ENCODE measurements at regions of chr19 and their contacts with region 1.

Region 1: DNA sequence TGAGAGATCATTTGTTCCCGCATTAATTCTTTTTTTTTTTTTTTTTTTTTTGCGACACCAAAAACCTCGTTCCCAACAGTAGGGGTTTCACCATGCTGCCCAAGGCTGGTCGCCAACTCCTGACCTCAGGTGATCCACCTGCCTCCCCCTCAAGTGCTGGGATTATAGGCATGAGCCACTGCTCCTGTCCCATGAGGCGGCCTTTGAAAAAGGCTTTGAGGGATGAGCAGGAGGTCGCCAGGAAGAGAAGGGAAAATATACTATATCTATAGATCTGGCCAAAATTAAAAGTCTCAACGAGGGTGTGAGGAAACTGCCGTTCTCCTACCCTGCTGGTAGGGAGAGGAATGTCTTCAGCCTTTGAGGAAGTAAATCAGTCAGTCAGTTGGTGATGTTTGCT is 26.2 kb downstream of the ZNF473 start:
- DNase-seq: no peak
- ATAC-seq: no peak
- H3K4me3 ChIP-seq: no peak overlapping the region
- H3K27ac ChIP-seq: no peak overlapping the region
- H3K4me1 ChIP-seq: peaks cover 5% of the 10 kb centered on the region
- H3K27me3 ChIP-seq: peaks cover 17% of the 10 kb centered on the region; the same call in 1 of the 2 replicates
- CTCF ChIP-seq: no peak

Region 2: GRCh38 chr19:49746206-49747091 is 305.5 kb before region 1 on chr19:
- CTCF ChIA-PET with region 1: no interaction called
- POLR2A ChIA-PET with region 1: no interaction called
- intact Hi-C with region 1: no loop called
- DNase-seq: peak; percentile 46
- ATAC-seq: peak; percentile 50
- H3K4me3 ChIP-seq: no peak overlapping the region
- H3K27ac ChIP-seq: no peak overlapping the region
- H3K4me1 ChIP-seq: no peaks in the 10 kb centered on the region
- H3K27me3 ChIP-seq: no peaks in the 10 kb centered on the region
- CTCF ChIP-seq: 0 out of 2 replicates have a peak, but pooled peaks have one; percentile 20

Region 3: GRCh38 chr19:49973987-49974386 is 78.0 kb before region 1 on chr19:
- CTCF ChIA-PET with region 1: no interaction called
- POLR2A ChIA-PET with region 1: no interaction called
- intact Hi-C with region 1: no loop called
- DNase-seq: no peak
- ATAC-seq: no peak
- H3K4me3 ChIP-seq: no peak overlapping the region
- H3K27ac ChIP-seq: no peak overlapping the region
- H3K4me1 ChIP-seq: no peaks in the 10 kb centered on the region
- H3K27me3 ChIP-seq: no peaks in the 10 kb centered on the region
- CTCF ChIP-seq: no peak

Region 4: GRCh38 chr19:50067575-50067974 is 15.6 kb after region 1 on chr19:
- CTCF ChIA-PET with region 1: interaction called, 13 read pairs
- POLR2A ChIA-PET with region 1: no interaction called
- intact Hi-C with region 1: no loop called
- DNase-seq: no peak
- ATAC-seq: no peak
- H3K4me3 ChIP-seq: no peak overlapping the region
- H3K27ac ChIP-seq: no peak overlapping the region
- H3K4me1 ChIP-seq: no peaks in the 10 kb centered on the region
- H3K27me3 ChIP-seq: no peaks in the 10 kb centered on the region
- CTCF ChIP-seq: no peak

Measured in PC-3 (cell line).